ENCODE measurements at regions of chr1 and their contacts with region 1.

Region 1: GRCh38 chr1:17236779-17237560 is 11.9 kb upstream of the PADI3 start:
- DNase-seq: peak; percentile 83 to 90 (median 85)
- H3K4me3 ChIP-seq: no peak overlapping the region
- H3K27ac ChIP-seq: no peak overlapping the region
- H3K4me1 ChIP-seq: peaks cover 0 to 19% (median 9%) of the 10 kb centered on the region in 4 experiments
- H3K27me3 ChIP-seq: peaks cover 0 to 3% (median 0%) of the 10 kb centered on the region in 5 experiments

Region 2: DNA sequence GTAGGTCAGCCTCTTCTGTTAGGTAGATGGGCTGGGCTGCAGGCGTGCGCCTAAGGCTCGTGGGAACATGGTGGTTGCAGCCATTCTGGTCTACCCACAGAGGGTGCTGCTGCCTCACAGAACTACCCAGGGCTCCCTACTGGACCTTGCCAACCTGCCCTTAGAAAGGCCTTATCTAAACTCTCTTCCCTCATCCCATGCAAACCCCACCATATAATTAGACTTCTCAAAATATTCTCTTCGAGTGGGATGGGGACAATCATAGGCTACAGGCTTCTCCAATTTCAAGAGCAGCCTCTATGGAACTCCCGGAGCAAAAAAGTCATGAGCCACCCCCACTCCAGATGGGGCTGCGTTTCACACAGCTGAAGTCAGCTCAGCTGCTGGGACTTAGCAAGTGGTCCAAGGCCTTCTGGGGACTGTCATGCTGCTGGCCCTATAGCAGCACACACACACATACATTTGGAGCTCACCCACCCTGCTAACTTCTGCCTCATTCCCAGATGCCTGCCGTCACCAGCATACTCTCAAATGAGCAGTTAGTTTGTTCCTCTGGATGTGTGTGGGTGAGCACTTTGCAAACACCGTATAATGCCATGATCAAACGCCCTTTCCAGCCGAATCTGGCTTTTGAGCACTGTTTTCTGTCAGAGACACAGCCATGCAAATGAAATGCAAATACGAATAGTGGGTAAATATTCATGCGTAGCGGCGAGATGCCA is 177.1 kb before region 1 on chr1:
- CTCF ChIA-PET with region 1: interaction called, 19 read pairs
- POLR2A ChIA-PET with region 1: no interaction called
- DNase-seq: peak; percentile 69 to 81 (median 71)
- H3K4me3 ChIP-seq: no peak overlapping the region
- H3K27ac ChIP-seq: no peak overlapping the region
- H3K4me1 ChIP-seq: peaks cover 0 to 20% (median 2%) of the 10 kb centered on the region in 4 experiments
- H3K27me3 ChIP-seq: no peaks in the 10 kb centered on the region

Region 3: GRCh38 chr1:17207966-17208418 is 29.0 kb before region 1 on chr1:
- CTCF ChIA-PET with region 1: interaction called, 16 read pairs
- POLR2A ChIA-PET with region 1: no interaction called
- DNase-seq: peak; percentile 70 to 87 (median 84)
- H3K4me3 ChIP-seq: peak overlapping the region in 1 of 7 experiments; percentile 16
- H3K27ac ChIP-seq: no peak overlapping the region
- H3K4me1 ChIP-seq: peaks cover 2 to 48% (median 33%) of the 10 kb centered on the region in 4 experiments
- H3K27me3 ChIP-seq: no peaks in the 10 kb centered on the region

Region 4: DNA sequence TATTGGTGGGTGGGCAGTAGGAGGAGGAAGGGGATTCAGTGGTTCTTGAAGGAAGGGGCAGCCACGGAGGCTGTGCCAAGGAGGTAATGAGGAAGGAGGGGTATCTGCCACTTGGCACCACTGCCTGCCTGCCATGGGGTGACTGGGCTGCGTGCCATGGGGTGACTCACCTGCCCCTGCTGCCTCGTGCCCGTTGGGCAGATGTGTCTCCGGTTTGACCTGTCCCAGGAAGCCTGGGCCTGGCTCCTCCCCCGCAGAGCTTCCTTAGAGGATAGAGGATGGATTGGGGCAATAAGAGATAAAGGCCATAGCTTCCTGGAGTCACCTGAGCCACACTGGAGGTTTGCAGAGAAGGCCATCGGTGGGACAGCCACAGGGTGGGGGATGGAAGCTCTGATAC is 13.6 kb after region 1 on chr1:
- CTCF ChIA-PET with region 1: interaction called, 20 read pairs
- POLR2A ChIA-PET with region 1: interaction called, 3 read pairs
- DNase-seq: peak; percentile 90 to 99 (median 97)
- H3K4me3 ChIP-seq: peak overlapping the region in 2 of 7 experiments; percentile 8 to 24
- H3K27ac ChIP-seq: peak overlapping the region; percentile 29 to 79
- H3K4me1 ChIP-seq: peaks cover 0 to 51% (median 35%) of the 10 kb centered on the region in 4 experiments
- H3K27me3 ChIP-seq: no peaks in the 10 kb centered on the region

Region 5: DNA sequence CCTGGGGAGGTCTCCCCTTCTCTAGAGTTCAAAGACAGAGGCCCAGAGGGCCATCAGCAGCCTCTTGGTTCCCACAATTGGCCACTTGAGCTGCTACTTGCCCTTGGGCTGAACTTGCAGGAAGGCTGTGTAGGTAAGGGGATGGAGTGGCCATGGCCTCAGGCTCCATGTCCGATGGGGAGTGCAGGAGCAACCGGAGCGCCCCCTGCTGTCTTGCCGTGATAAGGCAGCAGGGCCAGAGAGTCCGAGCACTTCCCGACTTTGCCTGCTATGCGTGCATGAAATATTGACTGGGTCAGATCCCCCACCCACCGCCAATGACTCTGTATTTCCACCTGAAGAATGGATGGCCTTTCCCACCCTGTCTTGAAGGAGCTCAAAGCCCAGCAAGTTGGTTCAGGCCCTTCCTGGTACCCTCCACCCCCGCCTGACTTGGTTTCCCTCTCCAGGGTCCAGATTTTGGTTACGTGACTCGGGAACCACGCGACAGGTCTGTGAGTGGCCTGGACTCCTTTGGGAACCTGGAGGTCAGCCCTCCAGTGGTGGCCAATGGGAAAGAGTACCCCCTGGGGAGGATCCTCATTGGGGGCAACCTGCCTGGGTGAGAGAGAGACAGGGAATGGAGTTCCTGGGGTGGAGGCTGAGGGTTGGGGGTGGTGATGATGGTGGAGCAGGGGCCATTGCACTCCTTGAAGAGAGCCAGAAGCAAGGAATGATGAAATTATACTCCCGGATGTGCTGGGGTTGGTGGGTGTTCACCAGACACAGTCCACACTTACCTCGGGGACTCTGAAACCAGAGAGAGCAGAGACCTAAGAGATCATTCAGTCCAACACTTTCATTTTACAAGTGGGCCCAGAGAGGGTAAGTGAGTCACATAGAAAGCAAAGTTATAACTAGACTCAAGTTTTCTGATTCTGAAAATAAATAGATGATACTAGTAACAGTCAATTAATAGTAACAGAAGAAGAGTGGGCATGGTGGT is 37.5 kb after region 1 on chr1:
- CTCF ChIA-PET with region 1: interaction called, 33 read pairs
- POLR2A ChIA-PET with region 1: no interaction called
- DNase-seq: peak; percentile 40 to 59 (median 44)
- H3K4me3 ChIP-seq: no peak overlapping the region
- H3K27ac ChIP-seq: no peak overlapping the region
- H3K4me1 ChIP-seq: peaks cover 0 to 40% (median 13%) of the 10 kb centered on the region in 4 experiments
- H3K27me3 ChIP-seq: no peaks in the 10 kb centered on the region